Dendritic cell treated with granulocyte-macrophage colony-stimulating factor and Interleukin-4, amounts not matched to agents 40 ng/mL and 50 ng/mL, for 4 days (primary cell): ENCODE measurements at regions of chr19 and their contacts with region 1.

Region 1: DNA sequence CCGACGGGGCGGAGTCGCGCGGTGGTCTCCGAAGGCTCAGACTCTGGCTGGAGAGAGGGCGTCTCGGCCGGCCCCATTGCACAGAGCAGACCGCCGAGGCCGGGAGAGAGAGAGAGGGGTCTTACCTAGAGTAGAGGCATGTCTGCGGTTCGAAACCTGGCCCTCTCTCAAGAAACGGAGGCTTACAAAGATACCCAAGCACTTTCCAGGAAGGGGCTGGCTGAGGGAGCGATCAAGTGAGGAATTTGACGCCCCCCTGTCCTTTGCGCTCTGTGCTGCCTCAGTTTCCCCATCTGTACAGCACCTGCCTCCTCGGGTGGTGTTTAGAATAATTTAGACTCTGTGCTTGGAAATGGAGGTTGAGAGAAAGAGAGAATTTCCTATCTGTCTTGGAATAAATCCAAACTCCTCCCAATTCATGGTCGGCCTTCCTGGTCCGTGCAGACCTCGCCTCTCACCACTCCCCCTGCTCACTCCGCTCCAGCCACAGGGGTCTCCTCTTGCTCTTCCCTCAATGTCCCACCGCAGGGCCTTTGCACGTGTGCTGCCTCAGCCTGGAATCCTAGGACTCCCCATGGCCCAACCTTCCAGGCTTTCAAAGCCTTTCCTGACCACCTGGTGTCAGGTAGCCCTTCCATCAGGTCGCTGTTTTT is 658 bp upstream of the ISOC2 start:
- H3K4me3 Mint-ChIP-seq: peak overlapping the region; percentile 90
- H3K27ac Mint-ChIP-seq: peak overlapping the region; percentile 92
- H3K4me1 Mint-ChIP-seq: peaks cover 34% of the 10 kb centered on the region
- H3K27me3 Mint-ChIP-seq: peaks cover 15% of the 10 kb centered on the region

Region 2: GRCh38 chr19:55476100-55476775 is 14.1 kb after region 1 on chr19 and contains the start of gene ZNF628:
- intact Hi-C with region 1: loop called (anchors 1 kb)
- H3K4me3 Mint-ChIP-seq: peak within 1 kb of the TSS; percentile 87
- H3K27ac Mint-ChIP-seq: peak within 1 kb of the TSS; percentile 90
- H3K4me1 Mint-ChIP-seq: peaks cover 33% of the 10 kb centered on the region
- H3K27me3 Mint-ChIP-seq: no peaks in the 10 kb centered on the region